Activated CD8-positive, alpha-beta T cell treated with anti-CD3 and anti-CD28 coated beads, Interleukin-2, amount 10 ng/mL, durations not matched to agents 7 days and 5 days (primary cell): ENCODE measurements at regions of chr1 and their contacts with region 1.

Region 1: DNA sequence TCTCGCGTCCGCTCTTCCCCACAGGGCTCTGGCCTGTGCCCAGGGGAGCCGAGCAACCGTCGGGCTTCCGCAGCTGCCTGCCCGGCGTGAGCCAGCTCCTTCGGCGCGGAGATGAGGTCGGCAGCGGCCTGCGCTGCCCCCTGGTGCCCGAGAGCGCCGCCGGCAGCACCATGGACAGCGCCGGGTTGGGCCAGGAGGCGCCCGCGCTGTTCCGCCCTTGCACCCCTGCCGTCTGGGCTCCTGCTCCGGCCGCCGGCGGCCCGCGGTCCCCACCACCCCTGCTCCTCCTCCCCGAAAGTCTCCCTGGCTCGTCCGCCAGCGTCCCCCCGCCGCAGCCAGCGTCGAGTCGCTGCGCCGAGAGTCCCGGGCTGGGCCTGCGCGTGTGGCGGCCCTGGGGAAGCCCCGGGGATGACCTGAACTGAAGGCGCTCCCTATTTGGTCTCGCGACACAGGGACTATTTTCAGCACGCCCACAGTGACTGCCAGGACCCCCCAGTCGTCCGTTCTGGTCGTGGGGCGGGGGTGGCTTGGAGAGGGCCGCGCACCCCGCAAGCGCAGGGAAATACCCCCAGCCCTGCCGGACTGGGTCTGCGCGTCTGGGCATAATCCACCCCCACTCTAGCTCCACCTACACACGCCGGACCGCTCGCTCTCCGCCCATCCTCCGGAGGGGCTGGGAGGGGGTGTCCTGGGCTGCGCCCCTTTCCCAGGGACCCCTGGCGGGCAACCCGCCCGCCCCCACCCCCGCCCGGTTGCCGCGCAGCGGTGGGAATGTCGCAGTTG is 1.3 kb downstream of the HES3 start:
- DNase-seq: peak; percentile 85
- ATAC-seq: peak; percentile 81
- H3K4me3 Mint-ChIP-seq: no peak overlapping the region
- H3K27ac Mint-ChIP-seq: no peak overlapping the region
- H3K4me1 Mint-ChIP-seq: peaks cover 16% of the 10 kb centered on the region
- H3K27me3 Mint-ChIP-seq: peaks cover 60% of the 10 kb centered on the region

Region 2: GRCh38 chr1:6016191-6016865 is 228.9 kb before region 1 on chr1:
- CTCF ChIA-PET with region 1: no interaction called
- POLR2A ChIA-PET with region 1: no interaction called
- DNase-seq: no peak
- ATAC-seq: no peak
- H3K4me3 Mint-ChIP-seq: no peak overlapping the region
- H3K27ac Mint-ChIP-seq: no peak overlapping the region
- H3K4me1 Mint-ChIP-seq: peaks cover 4% of the 10 kb centered on the region
- H3K27me3 Mint-ChIP-seq: no peaks in the 10 kb centered on the region

Region 3: DNA sequence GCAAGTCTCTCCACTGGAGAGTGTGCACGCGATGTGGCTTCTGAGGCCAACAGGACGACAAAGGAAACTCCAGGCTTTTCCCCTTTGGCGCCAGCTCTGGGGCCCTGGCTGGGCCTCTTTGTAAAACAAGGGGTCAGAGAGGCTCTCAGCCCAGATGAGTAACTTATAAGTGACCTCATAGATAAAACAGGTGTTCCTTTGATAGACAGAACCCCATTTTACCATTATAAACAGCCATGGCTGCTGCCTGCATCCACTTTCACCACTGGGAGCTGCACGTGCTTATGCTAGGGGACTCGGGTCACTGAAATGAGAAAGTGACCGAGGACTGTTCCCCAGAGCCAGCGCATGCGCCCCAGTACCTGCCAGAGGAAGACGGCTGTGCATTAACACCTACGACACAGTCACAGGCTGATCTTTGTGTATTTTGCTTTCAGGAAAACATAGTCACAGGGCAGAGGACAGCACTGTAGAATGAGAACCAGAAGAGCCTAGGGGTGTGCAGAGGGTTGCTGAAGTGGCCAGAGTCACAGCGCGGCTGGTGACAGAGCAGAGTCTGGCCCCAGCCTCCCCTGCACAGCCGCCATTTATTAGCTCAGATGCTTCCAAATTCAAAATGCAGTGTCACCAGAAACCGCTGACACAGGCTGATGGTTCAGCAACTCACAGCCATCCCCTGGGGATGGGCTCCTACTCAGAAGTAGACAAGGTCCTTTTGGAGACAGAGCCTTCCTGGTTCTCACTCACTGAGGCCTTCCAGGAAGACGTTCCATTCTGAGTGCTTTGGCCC is 26.7 kb before region 1 on chr1:
- CTCF ChIA-PET with region 1: no interaction called
- POLR2A ChIA-PET with region 1: no interaction called
- DNase-seq: no peak
- ATAC-seq: no peak
- H3K4me3 Mint-ChIP-seq: no peak overlapping the region
- H3K27ac Mint-ChIP-seq: no peak overlapping the region
- H3K4me1 Mint-ChIP-seq: no peaks in the 10 kb centered on the region
- H3K27me3 Mint-ChIP-seq: peaks cover 5% of the 10 kb centered on the region

Region 4: DNA sequence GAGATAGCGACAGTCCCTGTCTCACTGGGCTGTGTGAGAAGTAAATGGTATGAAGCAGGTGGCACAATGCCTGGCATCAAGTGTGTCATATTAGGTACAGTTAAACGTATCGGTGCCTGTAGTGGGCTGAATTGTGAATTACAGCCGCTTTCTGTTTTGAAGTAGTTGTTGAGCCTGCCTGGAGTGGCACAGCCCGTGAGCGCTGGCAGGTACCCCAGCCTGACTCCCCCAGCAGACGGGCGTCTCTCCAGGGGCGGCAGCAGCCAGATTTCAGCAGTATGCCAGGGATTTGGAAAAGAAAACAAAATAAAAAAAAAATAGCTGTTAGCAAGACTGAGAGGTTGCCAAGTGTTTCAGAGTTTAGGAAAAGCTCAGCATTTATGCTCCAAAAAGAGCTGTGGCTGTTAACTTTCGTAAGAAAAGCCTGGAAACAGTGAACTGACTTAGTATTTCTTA is 42.2 kb after region 1 on chr1:
- CTCF ChIA-PET with region 1: no interaction called
- POLR2A ChIA-PET with region 1: no interaction called
- DNase-seq: no peak
- ATAC-seq: no peak
- H3K4me3 Mint-ChIP-seq: no peak overlapping the region
- H3K27ac Mint-ChIP-seq: no peak overlapping the region
- H3K4me1 Mint-ChIP-seq: no peaks in the 10 kb centered on the region
- H3K27me3 Mint-ChIP-seq: no peaks in the 10 kb centered on the region

Region 5: DNA sequence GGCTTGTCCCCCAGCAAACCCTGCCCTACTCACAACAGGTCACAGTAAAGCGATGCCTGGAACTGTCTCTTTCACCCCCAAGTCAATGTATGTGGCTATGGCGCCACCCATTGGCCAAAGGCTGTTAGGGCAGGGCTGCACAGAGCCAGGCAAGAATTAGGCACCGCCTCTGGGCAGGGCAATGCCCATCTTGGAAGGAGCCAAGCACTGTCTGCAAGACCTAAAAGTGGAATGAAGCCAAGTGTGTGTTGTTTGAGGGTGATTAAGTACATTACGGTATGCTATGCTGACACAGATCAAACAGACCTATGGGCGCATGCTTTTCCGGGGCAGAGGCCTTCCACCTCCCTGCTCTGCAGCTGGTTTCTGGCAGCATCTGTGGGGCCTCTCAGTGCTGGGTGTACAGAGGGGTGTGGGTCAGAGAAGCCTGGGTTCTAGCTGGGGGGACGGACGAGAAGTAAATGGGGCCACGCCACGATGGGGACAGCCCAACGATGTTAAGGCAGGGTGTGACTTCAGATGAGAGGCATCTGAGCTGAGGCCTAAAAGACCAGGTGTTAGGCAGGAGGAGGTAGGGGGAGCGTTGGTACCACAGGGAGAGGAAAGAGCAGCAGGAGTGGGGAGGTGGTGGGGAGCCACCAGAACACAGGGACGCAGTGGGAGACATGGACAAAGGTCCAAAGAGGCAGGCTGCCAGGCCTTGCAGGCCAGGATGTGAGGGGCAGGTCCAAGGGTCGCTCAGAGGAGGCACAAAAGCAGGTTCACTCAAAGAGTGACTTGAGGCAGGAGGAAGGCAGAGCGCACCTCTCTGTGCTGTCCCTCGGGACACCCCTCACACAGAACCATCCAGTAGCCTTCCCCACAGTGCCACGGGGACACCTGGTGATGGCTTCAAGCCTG is 98.5 kb after region 1 on chr1:
- CTCF ChIA-PET with region 1: interaction called, 73 read pairs
- POLR2A ChIA-PET with region 1: no interaction called
- DNase-seq: peak; percentile 75
- ATAC-seq: peak; percentile 52
- H3K4me3 Mint-ChIP-seq: no peak overlapping the region
- H3K27ac Mint-ChIP-seq: no peak overlapping the region
- H3K4me1 Mint-ChIP-seq: peaks cover 19% of the 10 kb centered on the region
- H3K27me3 Mint-ChIP-seq: no peaks in the 10 kb centered on the region

Region 6: GRCh38 chr1:6393400-6394187 is 148.3 kb after region 1 on chr1 and contains the start of gene ACOT7:
- CTCF ChIA-PET with region 1: interaction called, 27 read pairs
- POLR2A ChIA-PET with region 1: no interaction called
- DNase-seq: peak; percentile 93
- ATAC-seq: peak; percentile 87
- H3K4me3 Mint-ChIP-seq: peak within 1 kb of the TSS; percentile 82
- H3K27ac Mint-ChIP-seq: peak within 1 kb of the TSS; percentile 96
- H3K4me1 Mint-ChIP-seq: peaks cover 43% of the 10 kb centered on the region
- H3K27me3 Mint-ChIP-seq: peaks cover 3% of the 10 kb centered on the region
- total RNA-seq, gene ACOT7: 97.0 to 102 TPM

Region 7: DNA sequence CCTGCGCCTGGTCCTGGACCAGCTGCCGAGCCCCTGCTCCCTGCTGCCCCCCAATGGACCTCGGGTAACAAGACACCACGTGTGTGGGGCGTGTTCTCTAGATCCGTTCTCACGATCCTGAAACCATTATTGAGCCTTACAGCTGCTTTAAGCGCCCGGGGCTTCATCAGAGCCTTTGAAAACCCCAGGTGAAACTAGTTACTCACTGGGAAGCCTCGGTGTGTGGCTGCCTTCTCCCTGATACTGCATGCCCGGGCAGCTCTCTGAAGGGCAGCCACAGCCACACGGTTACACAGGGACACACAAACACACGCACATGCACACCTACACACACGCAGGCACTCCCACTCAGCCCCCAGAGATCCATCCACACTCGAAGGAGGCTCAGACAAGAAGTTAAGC is 169.2 kb after region 1 on chr1:
- CTCF ChIA-PET with region 1: interaction called, 11 read pairs
- POLR2A ChIA-PET with region 1: no interaction called
- DNase-seq: peak; percentile 66
- ATAC-seq: peak; percentile 85
- H3K4me3 Mint-ChIP-seq: no peak overlapping the region
- H3K27ac Mint-ChIP-seq: no peak overlapping the region
- H3K4me1 Mint-ChIP-seq: peaks cover 15% of the 10 kb centered on the region
- H3K27me3 Mint-ChIP-seq: peaks cover 59% of the 10 kb centered on the region